ENCODE measurements at regions of chr7 and their contacts with region 1.

Region 1: GRCh38 chr7:130982160-130982638 is 248.2 kb upstream of the KLF14 start:
- DNase-seq: no peak
- ATAC-seq: peak; percentile 48 to 77 (median 72)
- H3K4me3 ChIP-seq: no peak overlapping the region
- H3K27ac ChIP-seq: peak overlapping the region; percentile 32
- H3K4me1 ChIP-seq: peaks cover 54% of the 10 kb centered on the region
- H3K27me3 ChIP-seq: no peaks in the 10 kb centered on the region
- CTCF ChIP-seq: peak; percentile 54

Region 2: DNA sequence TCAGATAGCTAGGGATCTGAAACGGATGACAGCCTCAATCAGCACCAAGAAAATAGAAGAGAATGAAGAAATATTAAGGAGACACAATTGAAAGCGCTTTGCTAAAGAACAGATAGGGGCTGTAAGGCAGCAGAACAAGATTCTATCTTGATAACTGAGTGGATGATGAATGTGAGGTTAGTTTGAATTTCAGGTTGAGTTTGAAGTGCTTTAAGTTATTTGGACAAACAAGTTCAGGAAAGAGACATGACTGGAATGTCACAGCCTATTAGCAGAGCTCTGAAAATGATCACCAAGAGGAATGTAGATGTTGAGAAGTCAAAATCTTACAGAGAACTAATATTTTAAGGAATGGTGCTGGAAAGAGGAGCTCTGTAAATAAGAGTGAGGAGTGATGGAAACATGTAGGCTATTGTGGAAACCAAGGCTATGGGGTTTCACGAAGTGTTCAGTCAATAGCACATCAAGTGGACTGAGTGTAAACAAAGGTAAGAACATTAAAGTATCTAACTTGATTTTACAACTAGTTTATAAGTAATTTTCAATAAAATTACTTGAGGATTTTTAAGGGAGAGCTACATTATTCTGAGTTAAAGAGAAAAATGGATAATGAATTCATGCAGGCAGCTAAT is 428.7 kb before region 1 on chr7:
- intact Hi-C with region 1: no loop called
- DNase-seq: no peak
- ATAC-seq: no peak
- H3K4me3 ChIP-seq: no peak overlapping the region
- H3K27ac ChIP-seq: no peak overlapping the region
- H3K4me1 ChIP-seq: no peaks in the 10 kb centered on the region
- H3K27me3 ChIP-seq: no peaks in the 10 kb centered on the region
- CTCF ChIP-seq: no peak

Region 3: GRCh38 chr7:131031099-131031868 is 49.1 kb after region 1 on chr7:
- intact Hi-C with region 1: loop called (anchors 5 kb)
- DNase-seq: no peak
- ATAC-seq: no peak
- H3K4me3 ChIP-seq: no peak overlapping the region
- H3K27ac ChIP-seq: no peak overlapping the region
- H3K4me1 ChIP-seq: peaks cover 67% of the 10 kb centered on the region
- H3K27me3 ChIP-seq: no peaks in the 10 kb centered on the region
- CTCF ChIP-seq: no peak